ENCODE measurements at regions of chr13 and their contacts with region 1.

Region 1: DNA sequence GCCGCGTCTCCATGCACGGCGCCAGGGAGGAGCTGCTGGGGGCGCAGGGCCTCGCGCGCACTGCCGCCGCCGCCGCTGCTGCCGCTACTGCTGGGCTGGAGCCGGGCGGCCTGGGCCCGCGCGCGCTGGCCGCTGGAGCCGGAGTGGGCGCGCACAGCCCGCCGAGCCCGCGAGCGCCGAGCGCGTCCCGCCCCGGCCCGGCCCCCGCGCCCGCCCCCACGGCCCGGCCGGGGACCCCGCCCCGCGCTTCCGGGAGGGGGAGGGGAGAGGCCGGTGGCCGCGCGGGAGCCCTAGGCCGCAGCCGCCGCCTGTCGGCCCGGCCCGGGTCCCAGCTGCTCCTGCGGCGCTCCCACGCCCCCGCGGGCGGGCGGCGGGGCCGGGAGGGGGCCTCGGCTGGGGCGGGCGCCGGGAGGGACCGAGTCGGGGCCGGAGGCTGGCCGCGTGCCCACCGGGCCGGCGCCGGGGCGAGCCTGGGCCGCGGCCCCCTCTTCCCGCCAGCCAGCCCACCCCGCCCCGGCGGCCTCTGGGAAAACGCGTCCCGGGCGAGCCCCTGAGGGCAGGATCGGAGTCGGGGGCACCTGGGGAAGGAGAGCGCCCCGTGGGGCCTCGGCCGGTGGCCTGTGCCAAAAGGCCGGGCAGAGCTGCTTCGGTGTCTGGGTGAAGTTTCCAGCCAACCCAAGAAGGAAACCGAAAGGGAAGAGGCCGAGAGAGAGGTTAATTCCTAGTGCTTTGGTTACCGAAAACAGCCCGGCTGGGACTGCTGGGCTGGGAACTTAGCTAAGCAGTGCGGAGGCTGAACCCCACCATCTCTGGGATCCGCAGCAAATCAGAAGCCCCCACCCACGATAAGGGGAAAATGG is at the start of gene STK24:
- DNase-seq: peak; percentile 68 to 69
- H3K4me3 ChIP-seq: peak within 1 kb of the TSS; percentile 83 to 93 (median 90)
- H3K27ac ChIP-seq: peak within 1 kb of the TSS; percentile 98 to 100 (median 100)
- H3K4me1 ChIP-seq: peaks cover 22 to 43% of the 10 kb centered on the region in 2 donors
- H3K27me3 ChIP-seq: no peaks in the 10 kb centered on the region
- CTCF ChIP-seq: no peak
- POLR2A ChIP-seq: peak in 1 of 2 donors; percentile 83
- total RNA-seq, gene STK24: 74.5 to 102 (median 90.7) TPM

Region 2: GRCh38 chr13:98445340-98446233 is 131.6 kb before region 1 on chr13:
- intact Hi-C with region 1: loop called (anchors 10 kb)
- DNase-seq: peak; percentile 68 to 70
- H3K4me3 ChIP-seq: no peak overlapping the region
- H3K27ac ChIP-seq: peak overlapping the region in 2 of 3 donors; percentile 40 to 55
- H3K4me1 ChIP-seq: peaks cover 0 to 19% of the 10 kb centered on the region in 2 donors
- H3K27me3 ChIP-seq: no peaks in the 10 kb centered on the region
- CTCF ChIP-seq: peak; percentile 83 to 98 (median 94)
- POLR2A ChIP-seq: no peak

Region 3: DNA sequence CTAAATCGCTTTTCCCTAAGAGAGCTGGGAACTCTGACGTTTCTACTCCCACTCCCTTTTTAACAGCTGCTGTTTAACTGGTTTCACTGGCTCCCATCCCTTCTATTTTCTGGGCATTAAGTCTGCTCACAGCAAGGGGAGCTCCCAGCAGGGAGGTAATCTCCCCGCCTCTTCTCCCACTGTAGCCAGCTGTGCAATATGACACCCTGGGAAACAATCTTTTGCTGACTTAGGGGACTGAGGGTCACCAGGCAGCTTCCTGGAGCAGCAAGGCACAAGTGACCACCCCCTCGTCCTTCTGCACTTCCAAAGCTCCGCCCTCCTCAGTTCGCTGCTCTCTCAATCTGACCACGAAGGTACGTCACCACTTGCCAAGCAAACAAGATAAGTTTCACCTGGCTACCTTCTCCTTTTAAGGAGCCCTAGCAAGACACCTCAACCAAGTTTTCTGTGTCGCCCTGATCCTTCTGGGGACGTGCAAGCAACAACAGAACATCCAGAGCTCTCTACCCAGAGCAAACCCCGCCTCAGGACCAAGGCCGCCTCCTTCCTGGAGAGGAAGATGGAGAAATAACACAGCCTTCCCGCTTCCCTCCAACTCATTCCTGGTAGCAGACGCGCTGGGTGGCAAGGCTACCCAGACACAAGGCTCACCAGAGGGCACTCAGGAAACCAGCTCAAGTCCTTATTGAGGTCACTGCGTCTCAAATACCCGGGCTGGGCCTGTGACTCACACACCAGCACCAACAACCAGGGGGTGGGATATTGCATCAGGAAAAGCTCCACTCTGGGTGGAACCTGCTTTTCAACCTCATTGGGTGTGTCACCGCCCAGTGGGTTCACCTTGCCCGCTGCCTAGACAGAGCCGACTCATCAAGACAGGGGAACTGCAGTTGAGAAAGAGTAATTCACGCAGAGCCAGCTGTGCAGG is 92.6 kb before region 1 on chr13:
- intact Hi-C with region 1: loop called (anchors 5 kb)
- DNase-seq: peak; percentile 93 to 96
- H3K4me3 ChIP-seq: no peak overlapping the region
- H3K27ac ChIP-seq: peak overlapping the region; percentile 93 to 98 (median 96)
- H3K4me1 ChIP-seq: peaks cover 44 to 82% of the 10 kb centered on the region in 2 donors
- H3K27me3 ChIP-seq: no peaks in the 10 kb centered on the region
- CTCF ChIP-seq: peak in 2 of 6 experiments; percentile 3 to 16
- POLR2A ChIP-seq: peak in 1 of 2 donors; percentile 71

Measured in thyroid gland (tissue), 4 donors.